Activated CD4-positive, alpha-beta T cell treated with anti-CD3 and anti-CD28 coated beads, Interleukin-2, amount 10 ng/mL, durations not matched to agents 24 days and 14 days (primary cell): ENCODE measurements at regions of chr1 and their contacts with region 1.

Region 1: DNA sequence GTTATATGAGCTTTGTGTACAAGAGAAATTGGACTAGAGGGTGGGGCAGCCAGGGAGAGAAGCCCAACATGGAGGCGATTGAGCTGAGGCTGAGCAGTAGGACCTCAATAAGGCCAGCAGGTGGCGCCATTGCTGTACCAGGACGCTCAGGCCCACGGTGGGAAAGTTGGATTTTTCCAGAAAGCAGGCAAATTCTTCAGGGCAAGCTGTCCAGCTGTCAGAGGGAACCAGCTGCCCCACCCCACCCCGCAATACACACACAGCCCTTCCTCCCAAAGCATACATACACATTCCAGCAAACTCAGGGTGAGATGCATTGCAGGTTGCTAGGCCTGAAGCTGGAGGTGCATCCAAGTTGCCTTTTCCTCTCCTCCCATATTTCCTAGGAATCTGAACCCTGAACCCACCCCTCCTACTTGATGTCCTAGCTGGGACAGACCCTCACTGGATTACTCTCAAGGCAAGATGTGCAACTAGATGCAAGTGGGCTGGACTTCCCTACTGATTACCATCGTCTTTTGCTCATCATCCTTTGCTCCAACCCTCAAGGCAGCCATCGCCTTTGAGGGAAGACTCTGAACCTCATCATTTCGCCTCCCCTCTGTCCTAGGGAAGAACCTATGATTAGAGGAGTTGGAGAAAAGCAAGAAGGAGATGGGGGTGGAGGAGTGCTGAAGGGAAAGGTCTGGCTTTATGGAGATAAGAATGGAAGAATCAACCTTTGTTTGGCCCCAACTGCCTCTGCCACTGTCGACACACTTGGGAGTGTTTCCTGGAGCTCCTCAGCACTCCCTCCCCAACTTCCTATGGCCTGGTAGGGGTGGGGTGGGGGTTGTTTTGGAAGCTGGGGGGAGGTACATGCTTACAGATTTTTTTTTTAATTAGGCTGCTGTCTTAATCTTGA is 25.5 kb downstream of the CD34 start:
- DNase-seq: peak; percentile 90
- H3K4me3 Mint-ChIP-seq: no peak overlapping the region
- H3K27ac Mint-ChIP-seq: peak overlapping the region; percentile 97
- H3K4me1 Mint-ChIP-seq: peaks cover 35% of the 10 kb centered on the region
- H3K27me3 Mint-ChIP-seq: no peaks in the 10 kb centered on the region

Region 2: GRCh38 chr1:207751790-207752455 is 133.5 kb before region 1 on chr1 and contains the start of gene CD46:
- intact Hi-C with region 1: loop called (anchors 2 kb)
- DNase-seq: peak; percentile 99
- H3K4me3 Mint-ChIP-seq: peak within 1 kb of the TSS; percentile 98
- H3K27ac Mint-ChIP-seq: peak within 1 kb of the TSS; percentile 98
- H3K4me1 Mint-ChIP-seq: peaks cover 59% of the 10 kb centered on the region
- H3K27me3 Mint-ChIP-seq: no peaks in the 10 kb centered on the region
- total RNA-seq, gene CD46: 96.3 and 107 TPM in 2 replicates

Region 3: DNA sequence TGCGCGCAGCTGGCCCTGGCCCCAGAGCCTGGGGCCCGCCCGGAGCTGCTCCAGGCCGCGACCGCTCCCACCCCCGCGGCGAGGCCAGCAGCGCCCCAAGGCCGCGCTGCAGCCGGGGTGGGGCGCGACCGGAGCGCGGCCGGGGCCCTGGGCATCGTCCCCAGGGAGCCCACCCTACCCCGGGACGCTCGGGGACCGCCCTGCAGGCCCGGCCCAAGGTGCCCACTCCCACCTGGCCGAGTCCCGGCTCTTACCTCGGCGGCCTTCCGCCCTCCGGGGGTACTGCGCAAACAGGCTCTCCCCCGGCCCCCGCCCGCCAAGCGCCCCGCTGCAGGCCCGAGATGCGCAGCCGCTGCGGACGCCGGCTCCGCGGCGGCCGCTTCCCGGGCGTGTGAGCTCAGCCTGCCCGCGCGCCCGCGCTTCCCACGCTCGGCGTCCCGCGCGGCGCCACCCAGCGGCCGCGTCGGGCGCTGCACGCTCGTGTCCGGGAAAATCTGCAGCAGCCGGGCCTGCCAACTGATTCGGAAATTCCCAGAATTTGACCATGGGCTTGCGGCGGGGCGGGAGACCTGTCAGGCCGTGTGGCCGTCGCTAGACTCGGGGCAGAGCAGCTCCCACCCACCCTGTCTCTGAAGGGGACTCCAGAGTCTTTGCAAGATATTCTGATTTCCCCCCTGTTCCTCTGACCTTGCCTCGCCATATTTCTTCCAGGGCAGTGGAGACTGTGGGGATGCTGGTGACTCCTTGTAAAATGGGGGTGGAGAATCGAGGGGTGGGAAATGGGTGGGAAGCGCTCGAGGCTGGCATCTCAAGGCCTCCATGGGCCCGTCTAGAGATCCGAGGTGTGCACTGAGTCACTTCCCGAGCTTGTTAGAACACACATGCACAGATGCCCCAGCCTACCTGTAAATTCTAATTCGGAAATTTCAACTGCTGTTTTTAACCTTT is 16.3 kb before region 1 on chr1:
- intact Hi-C with region 1: loop called (anchors 1 kb)
- DNase-seq: peak; percentile 94
- H3K4me3 Mint-ChIP-seq: peak overlapping the region; percentile 93
- H3K27ac Mint-ChIP-seq: peak overlapping the region; percentile 91
- H3K4me1 Mint-ChIP-seq: peaks cover 77% of the 10 kb centered on the region
- H3K27me3 Mint-ChIP-seq: no peaks in the 10 kb centered on the region

Region 4: GRCh38 chr1:207925210-207925609 is 39.8 kb after region 1 on chr1:
- intact Hi-C with region 1: no loop called
- DNase-seq: peak; percentile 41
- H3K4me3 Mint-ChIP-seq: no peak overlapping the region
- H3K27ac Mint-ChIP-seq: no peak overlapping the region
- H3K4me1 Mint-ChIP-seq: no peaks in the 10 kb centered on the region
- H3K27me3 Mint-ChIP-seq: peaks cover 45% of the 10 kb centered on the region

Region 5: DNA sequence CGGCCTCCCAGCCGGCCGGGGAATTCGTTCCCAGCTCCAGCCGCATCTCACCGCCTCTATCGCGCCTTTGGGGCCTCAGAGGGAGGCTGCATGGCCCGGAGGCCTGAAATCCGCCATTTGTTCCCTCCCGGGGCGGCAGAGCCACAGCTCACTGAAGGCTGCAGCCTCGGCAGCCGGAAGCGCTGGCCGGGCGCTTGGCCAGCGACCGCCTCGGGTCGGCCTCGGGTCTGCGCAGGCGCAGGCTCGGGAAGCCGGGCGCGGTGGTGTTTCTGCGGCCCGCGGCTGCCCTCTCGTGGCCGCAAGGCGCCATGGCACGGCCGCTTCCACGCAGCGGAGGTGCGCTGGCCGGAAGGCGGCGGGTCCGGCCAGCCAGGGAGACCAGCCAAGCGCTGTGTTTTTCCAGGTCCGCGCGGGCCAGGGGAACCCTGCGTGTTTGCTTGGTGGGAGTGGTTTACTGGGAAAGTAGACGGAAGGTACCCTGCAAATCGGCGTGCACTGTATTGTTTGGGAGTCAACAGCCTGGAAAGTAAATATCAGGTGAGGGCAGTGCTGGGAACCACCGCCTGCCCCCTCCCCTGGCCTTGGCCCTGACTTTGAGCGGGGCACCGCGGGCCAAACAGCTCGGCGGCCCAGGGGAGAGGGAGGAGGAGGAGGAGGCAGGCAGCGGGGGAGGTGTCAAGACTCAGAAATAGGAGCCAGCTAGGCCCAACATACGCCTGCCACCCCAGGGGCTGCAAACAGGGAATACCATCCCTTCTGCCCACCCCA is 78.2 kb after region 1 on chr1:
- intact Hi-C with region 1: loop called (anchors 1 kb)
- DNase-seq: peak; percentile 96
- H3K4me3 Mint-ChIP-seq: peak overlapping the region; percentile 84
- H3K27ac Mint-ChIP-seq: no peak overlapping the region
- H3K4me1 Mint-ChIP-seq: peaks cover 12% of the 10 kb centered on the region
- H3K27me3 Mint-ChIP-seq: peaks cover 42% of the 10 kb centered on the region

Region 6: GRCh38 chr1:208245185-208245705 is 359.9 kb after region 1 on chr1:
- intact Hi-C with region 1: loop called (anchors 10 kb)
- DNase-seq: peak; percentile 92
- H3K4me3 Mint-ChIP-seq: peak overlapping the region; percentile 73
- H3K27ac Mint-ChIP-seq: no peak overlapping the region
- H3K4me1 Mint-ChIP-seq: peaks cover 10% of the 10 kb centered on the region
- H3K27me3 Mint-ChIP-seq: peaks cover 46% of the 10 kb centered on the region